ENCODE measurements at regions of chr5 and their contacts with region 1.

Region 1: DNA sequence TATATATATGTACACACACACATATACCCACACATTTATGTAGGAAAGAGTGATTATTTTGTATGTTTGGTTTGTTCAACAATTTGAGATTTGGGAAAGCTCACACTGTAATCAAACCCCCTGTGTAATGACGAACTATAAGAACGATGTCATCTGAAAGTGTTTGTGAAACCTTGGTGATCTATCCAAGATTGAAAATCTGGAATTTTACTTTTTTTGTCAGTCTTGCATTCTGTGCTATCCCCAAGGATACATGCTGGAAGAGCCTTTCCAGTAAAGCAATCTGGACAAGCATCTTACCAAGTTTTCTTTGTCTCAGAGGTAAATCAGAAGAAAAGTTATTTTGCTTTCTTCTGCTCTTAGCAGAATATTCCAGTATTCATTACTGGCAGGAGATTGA is 23.3 kb downstream of the SGCD start:
- DNase-seq: no peak
- ATAC-seq: no peak
- H3K4me3 ChIP-seq: no peak overlapping the region
- H3K27ac ChIP-seq: no peak overlapping the region
- H3K4me1 ChIP-seq: no peaks in the 10 kb centered on the region
- H3K27me3 ChIP-seq: no peaks in the 10 kb centered on the region
- CTCF ChIP-seq: no peak
- POLR2A ChIP-seq: no peak
- RAD21 ChIP-seq: no peak

Region 2: GRCh38 chr5:157159209-157159751 is 809.0 kb after region 1 on chr5:
- CTCF ChIA-PET with region 1: no interaction called
- POLR2A ChIA-PET with region 1: interaction called, 23 read pairs
- dilution Hi-C with region 1: no loop called
- in situ Hi-C with region 1: no loop called
- intact Hi-C with region 1: no loop called
- DNase-seq: no peak
- ATAC-seq: no peak
- H3K4me3 ChIP-seq: no peak overlapping the region
- H3K27ac ChIP-seq: no peak overlapping the region
- H3K4me1 ChIP-seq: no peaks in the 10 kb centered on the region
- H3K27me3 ChIP-seq: peaks cover 12% of the 10 kb centered on the region
- CTCF ChIP-seq: no peak
- POLR2A ChIP-seq: no peak
- RAD21 ChIP-seq: no peak

Measured in IMR-90 (cell line).